ENCODE measurements at regions of chr13 and their contacts with region 1.

Region 1: DNA sequence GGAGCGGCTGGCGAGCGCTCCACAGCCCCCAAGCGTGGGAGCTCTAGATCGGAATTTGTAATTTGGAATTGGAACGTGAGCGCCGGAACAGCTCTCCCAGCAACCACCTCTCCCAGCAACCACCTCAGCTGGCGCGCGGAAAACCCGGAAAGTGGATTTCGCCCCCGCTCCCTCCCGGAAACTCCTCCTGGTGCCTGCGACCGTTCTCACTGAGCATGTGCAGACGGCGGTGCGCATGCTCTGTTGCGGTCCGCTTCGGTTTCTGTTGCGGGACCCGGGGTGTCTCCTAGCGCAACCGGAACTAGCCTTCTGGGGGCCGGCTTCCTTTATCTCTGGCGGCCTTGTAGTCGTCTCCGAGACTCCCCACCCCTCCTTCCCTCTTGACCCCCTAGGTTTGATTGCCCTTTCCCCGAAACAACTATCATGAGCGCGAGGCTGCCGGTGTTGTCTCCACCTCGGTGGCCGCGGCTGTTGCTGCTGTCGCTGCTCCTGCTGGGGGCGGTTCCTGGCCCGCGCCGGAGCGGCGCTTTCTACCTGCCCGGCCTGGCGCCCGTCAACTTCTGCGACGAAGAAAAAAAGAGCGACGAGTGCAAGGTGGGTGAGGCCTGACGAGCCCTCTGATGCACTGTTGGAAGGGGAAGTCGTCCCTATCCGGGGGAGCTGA is at the start of gene TM9SF2:
- DNase-seq: peak; percentile 98
- ATAC-seq: peak; percentile 60
- H3K4me3 ChIP-seq: peak within 1 kb of the TSS; percentile 75 to 89 (median 87)
- H3K4me3 Mint-ChIP-seq: peak within 1 kb of the TSS; percentile 92
- H3K27ac ChIP-seq: peak within 1 kb of the TSS; percentile 89 to 90
- H3K27ac Mint-ChIP-seq: peak within 1 kb of the TSS; percentile 98
- H3K4me1 ChIP-seq: peaks cover 63 to 65% of the 10 kb centered on the region in 2 donors
- H3K4me1 Mint-ChIP-seq: peaks cover 77% of the 10 kb centered on the region
- H3K27me3 ChIP-seq: no peaks in the 10 kb centered on the region
- H3K27me3 Mint-ChIP-seq: no peaks in the 10 kb centered on the region
- CTCF ChIP-seq: no peak
- total RNA-seq, gene TM9SF2: 63.3 and 63.6 TPM in 2 replicates

Region 2: GRCh38 chr13:98576963-98577822 is 924.1 kb before region 1 on chr13 and contains the start of gene STK24:
- CTCF ChIA-PET with region 1: no interaction called
- POLR2A ChIA-PET with region 1: no interaction called
- intact Hi-C with region 1: loop called (anchors 10 kb)
- DNase-seq: peak; percentile 80
- ATAC-seq: peak; percentile 83
- H3K4me3 ChIP-seq: peak within 1 kb of the TSS; percentile 51 to 88 (median 72)
- H3K4me3 Mint-ChIP-seq: peak within 1 kb of the TSS; percentile 95
- H3K27ac ChIP-seq: peak within 1 kb of the TSS; percentile 67 to 87
- H3K27ac Mint-ChIP-seq: peak within 1 kb of the TSS; percentile 95
- H3K4me1 ChIP-seq: peaks cover 38 to 39% of the 10 kb centered on the region in 2 donors
- H3K4me1 Mint-ChIP-seq: peaks cover 37% of the 10 kb centered on the region
- H3K27me3 ChIP-seq: no peaks in the 10 kb centered on the region
- H3K27me3 Mint-ChIP-seq: no peaks in the 10 kb centered on the region
- CTCF ChIP-seq: no peak
- total RNA-seq, gene STK24: 117 and 120 TPM in 2 replicates

Region 3: GRCh38 chr13:99200432-99201167 is 300.7 kb before region 1 on chr13 and contains the start of gene UBAC2:
- CTCF ChIA-PET with region 1: no interaction called
- POLR2A ChIA-PET with region 1: no interaction called
- intact Hi-C with region 1: loop called (anchors 1 kb)
- DNase-seq: peak; percentile 98
- ATAC-seq: peak; percentile 73
- H3K4me3 ChIP-seq: peak within 1 kb of the TSS; percentile 71 to 97 (median 92)
- H3K4me3 Mint-ChIP-seq: peak within 1 kb of the TSS; percentile 97
- H3K27ac ChIP-seq: peak within 1 kb of the TSS; percentile 97
- H3K27ac Mint-ChIP-seq: peak within 1 kb of the TSS; percentile 94
- H3K4me1 ChIP-seq: peaks cover 38 to 46% of the 10 kb centered on the region in 2 donors
- H3K4me1 Mint-ChIP-seq: peaks cover 54% of the 10 kb centered on the region
- H3K27me3 ChIP-seq: no peaks in the 10 kb centered on the region
- H3K27me3 Mint-ChIP-seq: no peaks in the 10 kb centered on the region
- CTCF ChIP-seq: no peak
- total RNA-seq, gene UBAC2: 52.9 and 56.3 TPM in 2 replicates

Region 4: GRCh38 chr13:99417201-99418102 is 83.9 kb before region 1 on chr13:
- CTCF ChIA-PET with region 1: no interaction called
- POLR2A ChIA-PET with region 1: no interaction called
- intact Hi-C with region 1: loop called (anchors 1 kb)
- DNase-seq: no peak
- ATAC-seq: no peak
- H3K4me3 ChIP-seq: no peak overlapping the region
- H3K4me3 Mint-ChIP-seq: no peak overlapping the region
- H3K27ac ChIP-seq: no peak overlapping the region
- H3K27ac Mint-ChIP-seq: peak overlapping the region; percentile 67
- H3K4me1 ChIP-seq: peaks cover 51 to 58% of the 10 kb centered on the region in 2 donors
- H3K4me1 Mint-ChIP-seq: peaks cover 48% of the 10 kb centered on the region
- H3K27me3 ChIP-seq: peaks cover 0 to 3% (median 0%) of the 10 kb centered on the region in 4 experiments
- H3K27me3 Mint-ChIP-seq: no peaks in the 10 kb centered on the region
- CTCF ChIP-seq: no peak

Region 5: GRCh38 chr13:99542788-99543406 is 41.6 kb after region 1 on chr13:
- CTCF ChIA-PET with region 1: interaction called, 5 read pairs
- POLR2A ChIA-PET with region 1: interaction called, 5 read pairs
- intact Hi-C with region 1: loop called (anchors 2 kb)
- DNase-seq: peak; percentile 93
- ATAC-seq: peak; percentile 97
- H3K4me3 ChIP-seq: peak overlapping the region in 2 of 5 experiments; percentile 10 to 49
- H3K4me3 Mint-ChIP-seq: peak overlapping the region; percentile 56
- H3K27ac ChIP-seq: peak overlapping the region; percentile 83 to 89
- H3K27ac Mint-ChIP-seq: peak overlapping the region; percentile 89
- H3K4me1 ChIP-seq: peaks cover 31 to 53% of the 10 kb centered on the region in 2 donors
- H3K4me1 Mint-ChIP-seq: peaks cover 50% of the 10 kb centered on the region
- H3K27me3 ChIP-seq: no peaks in the 10 kb centered on the region
- H3K27me3 Mint-ChIP-seq: no peaks in the 10 kb centered on the region
- CTCF ChIP-seq: no peak

Measured in B cell (primary cell).